Calu3 (cell line): ENCODE measurements at regions of chr12 and their contacts with region 1.

Region 1: GRCh38 chr12:29317556-29318363 is 63.2 kb downstream of the ERGIC2 start:
- DNase-seq: peak; percentile 37
- H3K4me3 Mint-ChIP-seq: no peak overlapping the region
- H3K27ac Mint-ChIP-seq: no peak overlapping the region
- H3K4me1 Mint-ChIP-seq: peaks cover 22% of the 10 kb centered on the region
- H3K27me3 Mint-ChIP-seq: no peaks in the 10 kb centered on the region
- CTCF ChIP-seq: peak; percentile 80

Region 2: GRCh38 chr12:29073628-29074239 is 244.0 kb before region 1 on chr12:
- CTCF ChIA-PET with region 1: interaction called, 14 read pairs
- intact Hi-C with region 1: loop called (anchors 1 kb)
- DNase-seq: peak; percentile 21
- H3K4me3 Mint-ChIP-seq: no peak overlapping the region
- H3K27ac Mint-ChIP-seq: no peak overlapping the region
- H3K4me1 Mint-ChIP-seq: no peaks in the 10 kb centered on the region
- H3K27me3 Mint-ChIP-seq: peaks cover 19% of the 10 kb centered on the region
- CTCF ChIP-seq: peak; percentile 65

Region 3: GRCh38 chr12:29088611-29089219 is 229.0 kb before region 1 on chr12:
- CTCF ChIA-PET with region 1: interaction called, 15 read pairs
- intact Hi-C with region 1: loop called (anchors 1 kb)
- DNase-seq: no peak
- H3K4me3 Mint-ChIP-seq: no peak overlapping the region
- H3K27ac Mint-ChIP-seq: no peak overlapping the region
- H3K4me1 Mint-ChIP-seq: no peaks in the 10 kb centered on the region
- H3K27me3 Mint-ChIP-seq: no peaks in the 10 kb centered on the region
- CTCF ChIP-seq: peak; percentile 57

Region 4: DNA sequence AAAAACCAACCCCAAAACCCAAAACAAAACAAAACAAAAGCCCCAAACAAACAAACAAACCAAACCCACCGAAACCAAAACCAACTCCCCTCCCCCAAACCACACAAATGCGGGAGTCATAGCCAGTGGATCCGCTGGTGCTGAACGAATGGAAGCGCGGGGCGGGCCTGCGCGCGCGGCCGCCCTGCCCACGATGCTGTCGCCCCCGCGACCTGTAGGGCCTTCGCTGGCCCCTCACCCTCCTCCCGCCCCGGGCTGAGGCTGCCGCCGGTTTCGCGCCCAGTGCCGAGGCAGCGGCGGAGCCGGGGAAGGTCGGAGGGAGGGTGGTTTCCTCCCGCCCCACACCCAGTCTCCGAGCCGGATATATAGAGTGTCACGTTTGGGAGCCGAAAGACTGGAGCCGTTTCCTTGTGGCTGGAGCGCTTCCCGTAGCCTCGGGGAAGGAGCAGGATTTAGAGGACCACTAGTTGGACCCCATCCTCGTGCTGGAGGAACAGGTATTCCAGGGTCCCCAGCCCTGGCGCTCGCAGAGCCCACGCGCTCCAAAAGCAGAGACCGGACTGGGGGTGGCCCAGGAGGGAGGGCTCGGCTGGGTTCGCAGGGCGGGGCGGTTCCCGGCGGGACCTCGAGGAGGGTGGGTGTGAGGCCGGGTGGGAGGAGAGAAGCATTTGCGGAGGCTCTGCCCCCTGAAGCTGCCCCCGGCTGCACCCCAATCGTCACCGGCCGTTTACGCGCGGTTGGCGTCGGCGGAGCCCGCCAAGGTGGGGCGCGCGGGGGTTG is 168.7 kb before region 1 on chr12 and contains the start of gene FAR2:
- CTCF ChIA-PET with region 1: no interaction called
- intact Hi-C with region 1: loop called (anchors 10 kb)
- DNase-seq: peak; percentile 76
- H3K4me3 Mint-ChIP-seq: peak within 1 kb of the TSS; percentile 98
- H3K27ac Mint-ChIP-seq: peak within 1 kb of the TSS; percentile 99
- H3K4me1 Mint-ChIP-seq: peaks cover 12% of the 10 kb centered on the region
- H3K27me3 Mint-ChIP-seq: no peaks in the 10 kb centered on the region
- CTCF ChIP-seq: no peak
- total RNA-seq, gene FAR2: 20.8 and 24.0 TPM in 2 replicates

Region 5: DNA sequence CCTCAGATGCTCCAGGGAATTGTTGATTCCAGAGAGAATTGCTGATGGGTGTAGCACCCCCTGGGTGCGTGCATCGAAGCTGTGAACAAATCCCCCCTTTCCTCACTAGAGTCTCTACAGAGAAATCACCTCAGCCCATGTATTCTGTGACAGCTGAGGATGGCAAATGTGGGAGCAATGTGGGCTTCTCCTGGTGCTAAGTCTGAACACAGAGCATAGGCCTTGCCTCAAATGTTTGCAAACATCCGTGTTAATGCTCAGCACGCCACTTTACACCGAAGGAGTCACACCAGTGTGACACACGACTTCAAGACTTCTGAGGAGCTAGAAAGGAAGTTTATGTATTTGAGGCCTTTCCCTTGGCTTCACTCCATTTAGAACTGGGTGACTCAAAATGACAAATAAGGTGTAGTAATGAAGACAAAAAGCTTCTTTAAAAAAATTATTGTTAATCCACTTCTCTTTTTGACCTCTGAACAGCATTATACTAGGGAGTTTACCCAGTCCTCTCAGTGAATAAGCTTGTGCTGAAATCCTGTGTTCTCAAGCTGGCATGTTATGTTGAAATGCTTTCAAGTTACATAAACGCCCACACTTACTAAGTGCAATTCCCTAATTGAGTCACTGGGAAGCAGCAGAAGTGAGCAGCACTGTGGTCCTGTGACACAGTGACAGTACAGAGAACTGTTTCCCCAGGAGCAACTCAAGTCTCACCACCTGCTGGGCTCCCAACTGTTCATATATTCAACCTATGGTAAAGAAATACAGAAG is 75.8 kb before region 1 on chr12:
- CTCF ChIA-PET with region 1: interaction called, 9 read pairs
- intact Hi-C with region 1: loop called (anchors 2 kb)
- DNase-seq: peak; percentile 52
- H3K4me3 Mint-ChIP-seq: peak overlapping the region; percentile 36
- H3K27ac Mint-ChIP-seq: peak overlapping the region; percentile 88
- H3K4me1 Mint-ChIP-seq: peaks cover 69% of the 10 kb centered on the region
- H3K27me3 Mint-ChIP-seq: no peaks in the 10 kb centered on the region
- CTCF ChIP-seq: no peak

Region 6: DNA sequence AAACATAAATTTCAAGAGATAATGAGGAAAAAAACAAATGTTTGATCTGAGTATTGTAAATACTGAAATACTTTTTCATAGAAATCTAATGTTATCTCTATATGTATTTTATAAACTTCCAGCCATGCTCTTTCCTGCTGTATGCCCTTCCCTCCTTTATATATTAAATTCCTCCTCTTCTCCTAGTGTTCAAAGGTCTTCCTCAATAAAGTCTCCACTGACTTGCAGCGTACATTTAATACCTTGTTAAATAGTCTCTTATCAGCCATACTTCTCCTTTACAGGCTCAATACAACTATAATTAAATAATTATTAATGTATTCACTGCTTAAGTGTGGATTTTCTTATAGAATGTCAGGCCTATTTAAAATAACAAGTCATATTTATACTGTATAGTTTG is 37.2 kb after region 1 on chr12:
- CTCF ChIA-PET with region 1: no interaction called
- intact Hi-C with region 1: no loop called
- DNase-seq: no peak
- H3K4me3 Mint-ChIP-seq: no peak overlapping the region
- H3K27ac Mint-ChIP-seq: no peak overlapping the region
- H3K4me1 Mint-ChIP-seq: no peaks in the 10 kb centered on the region
- H3K27me3 Mint-ChIP-seq: no peaks in the 10 kb centered on the region
- CTCF ChIP-seq: no peak

Region 7: DNA sequence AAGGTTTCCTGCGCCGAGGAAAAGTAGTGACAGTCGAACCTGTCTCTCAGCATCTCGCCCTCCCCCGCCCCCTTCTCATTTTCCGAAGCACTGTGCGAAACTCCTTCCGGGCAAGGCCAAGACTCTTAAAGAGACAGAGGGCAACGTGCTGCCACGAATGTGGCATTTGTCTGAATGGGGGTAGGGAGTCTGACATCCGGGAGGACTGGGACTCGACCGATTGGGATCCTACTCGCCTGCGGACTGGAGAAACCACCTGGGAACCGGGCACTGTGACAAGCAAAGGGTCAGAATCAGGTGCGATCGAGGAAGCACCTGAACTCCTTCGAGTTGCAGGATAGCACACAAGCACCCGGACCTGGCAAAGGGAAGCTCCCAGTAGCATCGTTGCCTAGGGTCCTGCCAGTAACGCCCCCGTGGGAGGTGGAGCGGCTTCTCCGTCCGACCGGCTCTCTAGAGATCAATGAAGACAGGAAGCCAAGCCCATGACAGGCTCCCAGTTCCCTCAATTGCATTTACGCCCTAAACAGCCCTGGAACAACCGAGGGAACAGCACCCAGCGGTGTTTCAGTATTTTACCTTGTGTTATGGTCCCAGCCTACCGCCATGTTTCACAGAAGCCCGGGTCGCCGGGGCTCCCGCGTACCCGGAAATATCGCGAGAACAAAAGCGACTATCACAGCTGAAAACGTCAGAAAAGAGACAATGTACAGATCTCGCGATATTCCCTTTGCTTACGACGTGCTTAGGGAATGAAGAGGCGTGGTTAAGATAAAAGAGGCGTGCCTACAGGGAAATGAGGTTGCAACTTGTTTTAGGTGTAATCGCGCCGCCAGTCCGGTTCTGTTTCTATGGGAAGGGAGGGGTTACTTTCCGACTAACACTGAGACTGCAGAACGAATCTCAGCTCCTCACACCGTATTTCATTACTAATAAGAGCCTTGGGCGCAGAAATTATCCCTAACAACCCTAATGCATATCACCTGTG is 63.1 kb after region 1 on chr12 and contains the start of gene ERGIC2:
- CTCF ChIA-PET with region 1: no interaction called
- intact Hi-C with region 1: no loop called
- DNase-seq: peak; percentile 90
- H3K4me3 Mint-ChIP-seq: peak within 1 kb of the TSS; percentile 84
- H3K27ac Mint-ChIP-seq: peak within 1 kb of the TSS; percentile 93
- H3K4me1 Mint-ChIP-seq: peaks cover 10% of the 10 kb centered on the region
- H3K27me3 Mint-ChIP-seq: no peaks in the 10 kb centered on the region
- CTCF ChIP-seq: no peak
- total RNA-seq, gene ERGIC2: 112 and 120 TPM in 2 replicates